Motor neuron (in vitro differentiated cells): ENCODE measurements at regions of chr6 and their contacts with region 1.

Region 1: DNA sequence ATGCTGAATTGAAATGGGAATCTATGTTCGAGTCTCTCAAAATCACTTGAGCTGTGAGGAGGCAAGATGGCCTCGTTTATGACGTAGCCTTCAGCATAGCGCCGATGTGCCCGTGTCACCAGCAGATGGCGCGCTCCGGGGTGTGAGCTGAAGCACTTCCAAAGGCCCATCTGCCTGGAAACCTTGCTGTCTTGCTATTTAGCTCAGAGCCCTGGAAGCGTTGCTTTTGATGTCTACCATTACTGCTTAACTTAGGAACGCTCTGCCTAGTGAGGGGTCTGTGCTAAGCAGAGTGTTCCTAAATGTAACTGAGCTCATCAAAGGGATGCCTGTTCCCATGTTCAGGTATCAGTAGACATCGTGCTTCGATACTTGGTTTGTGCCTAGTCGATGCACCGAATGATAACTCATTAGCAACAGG is 67.7 kb downstream of the SYCP2L start:
- ATAC-seq: peak in 7 of 8 experiments; percentile 26 to 94 (median 82)
- H3K4me3 ChIP-seq: no peak overlapping the region
- H3K27ac ChIP-seq: no peak overlapping the region
- H3K4me1 ChIP-seq: no peaks in the 10 kb centered on the region

Region 2: GRCh38 chr6:11050731-11051130 is 96.1 kb after region 1 on chr6:
- in situ Hi-C with region 1: loop called in 1 of 9 experiments (anchors 25 kb)
- ATAC-seq: no peak
- H3K4me3 ChIP-seq: no peak overlapping the region
- H3K27ac ChIP-seq: no peak overlapping the region
- H3K4me1 ChIP-seq: no peaks in the 10 kb centered on the region

Region 3: DNA sequence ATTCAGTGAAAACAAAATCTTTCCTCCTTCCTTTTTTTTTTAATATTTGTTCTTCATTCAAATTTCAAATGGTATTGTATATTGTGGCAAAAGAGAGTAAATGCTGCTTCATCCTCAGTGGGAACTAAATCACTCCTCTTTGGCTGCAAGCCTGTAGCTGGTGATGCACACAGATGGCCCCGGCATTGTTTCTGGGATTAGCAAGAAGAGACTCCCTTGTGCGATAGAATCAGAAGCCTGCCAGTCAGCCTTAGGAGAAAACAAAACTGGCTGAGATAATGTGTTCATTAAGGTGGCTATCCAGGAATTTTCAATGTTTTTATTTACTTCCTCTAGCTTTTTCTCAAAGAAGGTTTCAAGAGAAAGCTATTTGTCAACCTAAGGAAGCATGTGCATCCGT is 110.2 kb after region 1 on chr6:
- in situ Hi-C with region 1: loop called in 6 of 9 experiments (anchors 5 to 25 kb)
- ATAC-seq: peak in 4 of 8 experiments; percentile 50 to 64 (median 50)
- H3K4me3 ChIP-seq: no peak overlapping the region
- H3K27ac ChIP-seq: no peak overlapping the region
- H3K4me1 ChIP-seq: no peaks in the 10 kb centered on the region

Region 4: DNA sequence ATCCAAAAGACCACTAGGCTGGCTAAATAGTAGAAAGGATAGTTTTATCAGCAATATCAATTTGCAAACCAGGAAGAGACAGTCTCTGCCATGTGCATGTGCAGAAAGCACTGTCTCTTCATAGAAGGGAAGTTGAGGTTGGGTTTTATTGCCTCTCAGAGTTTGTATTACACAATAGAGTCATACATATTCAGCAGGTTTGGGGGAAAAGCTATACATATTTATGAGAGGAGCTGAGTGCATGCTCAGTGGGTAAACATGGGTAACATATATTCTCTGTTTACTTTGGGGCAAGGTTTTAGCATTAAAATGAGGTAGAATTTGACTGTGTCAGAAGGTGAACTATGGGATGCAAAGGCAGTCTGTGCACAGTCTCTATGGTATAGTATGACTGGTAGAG is 597.8 kb after region 1 on chr6:
- in situ Hi-C with region 1: loop called in 1 of 9 experiments (anchors 25 kb)
- ATAC-seq: peak in 7 of 8 experiments; percentile 58 to 99 (median 76)
- H3K4me3 ChIP-seq: no peak overlapping the region
- H3K27ac ChIP-seq: no peak overlapping the region
- H3K4me1 ChIP-seq: no peaks in the 10 kb centered on the region